CD4-positive, alpha-beta memory T cell (primary cell): ENCODE measurements at regions of chr14 and their contacts with region 1.

Region 1: DNA sequence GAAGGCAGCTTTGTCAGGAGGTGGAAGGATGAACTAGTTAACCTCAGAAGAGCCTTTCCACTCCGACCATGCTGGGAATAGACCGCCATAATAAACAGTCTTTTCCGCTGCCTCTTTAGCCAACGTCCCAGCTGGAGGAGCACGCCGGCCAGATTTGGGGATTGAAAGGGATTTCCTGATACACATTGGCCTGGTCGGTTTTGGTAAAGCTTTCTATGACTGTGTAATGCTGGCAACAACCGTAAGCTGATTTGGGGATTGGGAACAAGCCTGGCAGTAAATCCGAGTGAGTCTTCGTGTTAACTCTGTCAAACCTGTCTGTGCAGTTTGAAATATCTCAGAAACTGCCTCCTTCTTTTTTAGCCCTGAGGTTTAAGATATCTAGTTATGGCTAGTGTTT is 87.0 kb downstream of the DAD1 start:
- DNase-seq: no peak
- H3K4me3 ChIP-seq: peak overlapping the region; percentile 43 to 62
- H3K4me3 Mint-ChIP-seq: peak overlapping the region; percentile 86 to 96 (median 90)
- H3K27ac ChIP-seq: peak overlapping the region; percentile 67
- H3K27ac Mint-ChIP-seq: peak overlapping the region; percentile 87 to 100 (median 94)
- H3K4me1 ChIP-seq: peaks cover 67% of the 10 kb centered on the region
- H3K4me1 Mint-ChIP-seq: peaks cover 25 to 93% (median 30%) of the 10 kb centered on the region in 4 donors
- H3K27me3 ChIP-seq: no peaks in the 10 kb centered on the region
- H3K27me3 Mint-ChIP-seq: no peaks in the 10 kb centered on the region

Region 2: GRCh38 chr14:22147704-22148103 is 354.3 kb before region 1 on chr14:
- CTCF ChIA-PET with region 1: no interaction called
- POLR2A ChIA-PET with region 1: no interaction called
- intact Hi-C with region 1: no loop called
- DNase-seq: no peak
- H3K4me3 ChIP-seq: no peak overlapping the region
- H3K4me3 Mint-ChIP-seq: peak overlapping the region in 7 of 8 donors; percentile 61 to 83 (median 70)
- H3K27ac ChIP-seq: no peak overlapping the region
- H3K27ac Mint-ChIP-seq: peak overlapping the region in 4 of 7 donors; percentile 17 to 48 (median 35)
- H3K4me1 ChIP-seq: no peaks in the 10 kb centered on the region
- H3K4me1 Mint-ChIP-seq: peaks cover 0 to 1% (median 0%) of the 10 kb centered on the region in 4 donors
- H3K27me3 ChIP-seq: no peaks in the 10 kb centered on the region
- H3K27me3 Mint-ChIP-seq: peaks cover 0 to 1% of the 10 kb centered on the region in 2 donors

Region 3: DNA sequence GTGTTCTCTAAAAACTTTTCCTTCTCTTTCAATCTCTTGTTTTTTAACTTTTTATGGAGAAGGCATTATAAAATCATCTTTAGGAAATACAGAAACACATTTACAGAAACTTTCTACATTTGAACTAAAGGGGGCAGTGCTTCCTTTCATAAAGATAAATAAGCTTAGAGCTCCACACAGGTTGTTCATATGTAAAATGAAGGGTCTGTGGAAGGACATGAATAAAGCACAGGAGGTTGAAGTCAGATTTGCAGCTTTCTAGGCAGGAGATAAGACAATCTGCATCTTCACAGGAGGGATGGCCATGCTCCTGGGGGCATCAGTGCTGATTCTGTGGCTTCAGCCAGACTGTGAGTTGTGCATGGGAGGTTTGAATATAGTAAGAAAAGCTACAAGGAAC is 339.0 kb before region 1 on chr14:
- CTCF ChIA-PET with region 1: no interaction called
- POLR2A ChIA-PET with region 1: no interaction called
- intact Hi-C with region 1: loop called (anchors 5 kb)
- DNase-seq: peak in 2 of 5 donors; percentile 10 to 21
- H3K4me3 ChIP-seq: no peak overlapping the region
- H3K4me3 Mint-ChIP-seq: peak overlapping the region; percentile 77 to 89 (median 86)
- H3K27ac ChIP-seq: no peak overlapping the region
- H3K27ac Mint-ChIP-seq: peak overlapping the region; percentile 35 to 89 (median 81)
- H3K4me1 ChIP-seq: no peaks in the 10 kb centered on the region
- H3K4me1 Mint-ChIP-seq: peaks cover 0 to 12% (median 3%) of the 10 kb centered on the region in 4 donors
- H3K27me3 ChIP-seq: no peaks in the 10 kb centered on the region
- H3K27me3 Mint-ChIP-seq: no peaks in the 10 kb centered on the region

Region 4: DNA sequence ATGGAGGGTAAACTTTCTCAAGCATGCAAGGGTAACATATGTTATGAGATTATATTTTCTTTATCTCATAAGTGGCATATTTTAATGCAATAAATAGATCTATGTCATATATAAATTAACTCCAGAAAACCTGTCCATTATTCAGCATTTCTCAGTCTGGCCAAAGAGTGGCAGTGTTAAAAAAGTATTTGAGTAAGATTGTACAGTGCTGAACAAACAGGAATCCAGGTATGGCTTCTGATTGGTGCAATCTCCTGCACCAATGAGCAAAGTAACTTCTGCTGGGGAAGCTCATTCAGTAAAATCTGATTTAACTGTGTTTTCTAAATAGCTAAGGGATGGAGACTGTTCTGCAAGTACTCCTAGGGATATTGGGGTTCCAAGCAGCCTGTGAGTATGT is 294.8 kb before region 1 on chr14:
- CTCF ChIA-PET with region 1: no interaction called
- POLR2A ChIA-PET with region 1: no interaction called
- intact Hi-C with region 1: no loop called
- DNase-seq: no peak
- H3K4me3 ChIP-seq: no peak overlapping the region
- H3K4me3 Mint-ChIP-seq: peak overlapping the region in 4 of 8 donors; percentile 5 to 53 (median 40)
- H3K27ac ChIP-seq: no peak overlapping the region
- H3K27ac Mint-ChIP-seq: no peak overlapping the region
- H3K4me1 ChIP-seq: no peaks in the 10 kb centered on the region
- H3K4me1 Mint-ChIP-seq: peaks cover 0 to 4% (median 1%) of the 10 kb centered on the region in 4 donors
- H3K27me3 ChIP-seq: no peaks in the 10 kb centered on the region
- H3K27me3 Mint-ChIP-seq: no peaks in the 10 kb centered on the region

Region 5: GRCh38 chr14:22221508-22221907 is 280.5 kb before region 1 on chr14:
- CTCF ChIA-PET with region 1: no interaction called
- POLR2A ChIA-PET with region 1: interaction called, 8 read pairs
- intact Hi-C with region 1: loop called (anchors 5 kb)
- DNase-seq: peak in 1 of 5 donors; percentile 21
- H3K4me3 ChIP-seq: no peak overlapping the region
- H3K4me3 Mint-ChIP-seq: peak overlapping the region in 7 of 8 donors; percentile 54 to 76 (median 67)
- H3K27ac ChIP-seq: no peak overlapping the region
- H3K27ac Mint-ChIP-seq: peak overlapping the region in 3 of 7 donors; percentile 67 to 84 (median 70)
- H3K4me1 ChIP-seq: no peaks in the 10 kb centered on the region
- H3K4me1 Mint-ChIP-seq: peaks cover 1 to 7% (median 6%) of the 10 kb centered on the region in 4 donors
- H3K27me3 ChIP-seq: no peaks in the 10 kb centered on the region
- H3K27me3 Mint-ChIP-seq: no peaks in the 10 kb centered on the region

Region 6: GRCh38 chr14:22418631-22419030 is 83.4 kb before region 1 on chr14:
- CTCF ChIA-PET with region 1: no interaction called
- POLR2A ChIA-PET with region 1: no interaction called
- intact Hi-C with region 1: no loop called
- DNase-seq: no peak
- H3K4me3 ChIP-seq: no peak overlapping the region
- H3K4me3 Mint-ChIP-seq: no peak overlapping the region
- H3K27ac ChIP-seq: no peak overlapping the region
- H3K27ac Mint-ChIP-seq: no peak overlapping the region
- H3K4me1 ChIP-seq: no peaks in the 10 kb centered on the region
- H3K4me1 Mint-ChIP-seq: no peaks in the 10 kb centered on the region
- H3K27me3 ChIP-seq: no peaks in the 10 kb centered on the region
- H3K27me3 Mint-ChIP-seq: no peaks in the 10 kb centered on the region

Region 7: GRCh38 chr14:22466491-22466890 is 35.5 kb before region 1 on chr14:
- CTCF ChIA-PET with region 1: no interaction called
- POLR2A ChIA-PET with region 1: no interaction called
- intact Hi-C with region 1: no loop called
- DNase-seq: no peak
- H3K4me3 ChIP-seq: no peak overlapping the region
- H3K4me3 Mint-ChIP-seq: no peak overlapping the region
- H3K27ac ChIP-seq: no peak overlapping the region
- H3K27ac Mint-ChIP-seq: no peak overlapping the region
- H3K4me1 ChIP-seq: no peaks in the 10 kb centered on the region
- H3K4me1 Mint-ChIP-seq: no peaks in the 10 kb centered on the region
- H3K27me3 ChIP-seq: no peaks in the 10 kb centered on the region
- H3K27me3 Mint-ChIP-seq: no peaks in the 10 kb centered on the region